PC-9 (cell line): ENCODE measurements at regions of chr12 and their contacts with region 1.

Region 1: GRCh38 chr12:121626087-121626852 is at the start of gene ORAI1:
- DNase-seq: peak; percentile 66 to 97
- H3K4me3 ChIP-seq: peak within 1 kb of the TSS; percentile 92
- H3K27ac ChIP-seq: peak within 1 kb of the TSS; percentile 44
- H3K4me1 ChIP-seq: peaks cover 29% of the 10 kb centered on the region
- H3K27me3 ChIP-seq: no peaks in the 10 kb centered on the region
- CTCF ChIP-seq: no peak
- total RNA-seq, gene ORAI1: 25.6 and 28.1 TPM in 2 replicates

Region 2: GRCh38 chr12:121550974-121551634 is 75.2 kb before region 1 on chr12:
- CTCF ChIA-PET with region 1: interaction called, 3 read pairs
- POLR2A ChIA-PET with region 1: no interaction called
- intact Hi-C with region 1: loop called (anchors 2 kb)
- DNase-seq: no peak
- H3K4me3 ChIP-seq: no peak overlapping the region
- H3K27ac ChIP-seq: no peak overlapping the region
- H3K4me1 ChIP-seq: no peaks in the 10 kb centered on the region
- H3K27me3 ChIP-seq: no peaks in the 10 kb centered on the region
- CTCF ChIP-seq: no peak

Region 3: DNA sequence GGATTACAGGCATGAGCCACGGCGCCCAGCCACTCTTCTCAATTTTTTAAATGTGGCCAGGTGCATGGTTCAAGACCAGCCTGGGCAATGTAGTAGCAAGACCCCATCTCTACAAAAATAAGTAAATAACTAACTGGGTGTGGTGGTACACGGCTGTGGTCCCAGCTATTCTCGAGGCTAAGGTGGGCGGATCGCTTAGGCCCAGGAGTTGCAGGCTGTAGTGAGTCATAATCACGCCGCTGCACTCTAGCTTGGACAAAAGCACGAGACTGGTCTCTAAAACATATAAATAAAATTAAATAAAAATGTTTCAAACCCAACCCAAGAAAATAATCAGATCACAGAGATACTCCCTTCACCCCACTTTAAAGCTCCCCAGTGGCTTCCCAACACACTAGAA is 54.4 kb before region 1 on chr12:
- CTCF ChIA-PET with region 1: interaction called, 3 read pairs
- POLR2A ChIA-PET with region 1: interaction called, 21 read pairs
- intact Hi-C with region 1: no loop called
- DNase-seq: no peak
- H3K4me3 ChIP-seq: no peak overlapping the region
- H3K27ac ChIP-seq: no peak overlapping the region
- H3K4me1 ChIP-seq: peaks cover 23% of the 10 kb centered on the region
- H3K27me3 ChIP-seq: no peaks in the 10 kb centered on the region
- CTCF ChIP-seq: no peak

Region 4: DNA sequence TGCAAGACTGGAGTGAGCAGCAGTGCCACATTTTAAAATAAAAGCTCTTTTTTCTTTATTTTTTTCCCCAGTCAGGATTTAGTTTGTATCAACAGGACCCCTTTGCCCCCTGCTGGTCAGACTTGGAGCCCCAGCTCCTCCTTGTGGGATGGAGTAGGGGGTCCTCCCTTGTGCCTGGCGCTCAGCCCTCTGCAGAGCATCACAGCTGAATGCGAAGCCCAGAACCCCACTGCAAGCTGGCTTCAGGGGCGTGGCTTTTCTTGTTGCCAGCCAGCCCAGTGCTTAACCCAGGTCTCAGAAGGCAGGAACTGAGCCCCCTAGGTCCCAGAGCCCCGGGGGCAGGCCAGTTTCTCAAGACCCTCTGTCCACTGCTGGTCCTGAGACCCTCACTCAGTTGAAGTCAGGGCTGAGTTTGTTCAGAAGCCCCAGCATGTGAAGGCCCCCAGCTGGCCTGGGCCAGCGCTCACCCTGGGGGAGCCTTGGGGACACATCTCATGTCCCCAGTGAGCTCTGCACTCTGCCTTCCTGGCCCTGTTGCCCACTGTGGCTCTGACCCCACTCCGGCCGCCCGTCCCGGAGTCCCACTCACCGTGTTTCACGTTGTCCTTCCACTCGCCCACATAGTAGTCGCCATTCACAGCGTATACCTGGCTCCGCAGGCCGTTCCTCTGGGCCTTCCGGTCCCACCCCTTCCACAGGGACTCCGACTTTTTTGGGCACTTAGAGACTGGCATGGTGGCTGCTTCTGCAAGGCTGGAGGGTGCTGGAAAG is 42.7 kb after region 1 on chr12:
- CTCF ChIA-PET with region 1: interaction called, 8 read pairs
- POLR2A ChIA-PET with region 1: no interaction called
- intact Hi-C with region 1: loop called (anchors 2 kb)
- DNase-seq: peak in 1 of 2 experiments; percentile 18
- H3K4me3 ChIP-seq: no peak overlapping the region
- H3K27ac ChIP-seq: no peak overlapping the region
- H3K4me1 ChIP-seq: peaks cover 42% of the 10 kb centered on the region
- H3K27me3 ChIP-seq: no peaks in the 10 kb centered on the region
- CTCF ChIP-seq: peak; percentile 62; the same call in 1 of the 2 replicates

Region 5: GRCh38 chr12:121712461-121713256 is 86.4 kb after region 1 on chr12 and contains the start of gene TMEM120B:
- CTCF ChIA-PET with region 1: no interaction called
- POLR2A ChIA-PET with region 1: interaction called, 12 read pairs
- intact Hi-C with region 1: no loop called
- DNase-seq: peak; percentile 41 to 84
- H3K4me3 ChIP-seq: peak within 1 kb of the TSS; percentile 77
- H3K27ac ChIP-seq: peak within 1 kb of the TSS; percentile 40; the same call in 1 of the 2 replicates
- H3K4me1 ChIP-seq: peaks cover 35% of the 10 kb centered on the region
- H3K27me3 ChIP-seq: no peaks in the 10 kb centered on the region
- CTCF ChIP-seq: no peak
- total RNA-seq, gene TMEM120B: 10.3 and 12.4 TPM in 2 replicates